AG04449 (cell line): ENCODE measurements at regions of chr6 and their contacts with region 1.

Region 1: GRCh38 chr6:130020907-130021629 is 2.7 kb downstream of the L3MBTL3 start:
- DNase-seq: peak; percentile 75
- H3K4me3 ChIP-seq: peak overlapping the region; percentile 73
- CTCF ChIP-seq: peak; percentile 82

Region 2: DNA sequence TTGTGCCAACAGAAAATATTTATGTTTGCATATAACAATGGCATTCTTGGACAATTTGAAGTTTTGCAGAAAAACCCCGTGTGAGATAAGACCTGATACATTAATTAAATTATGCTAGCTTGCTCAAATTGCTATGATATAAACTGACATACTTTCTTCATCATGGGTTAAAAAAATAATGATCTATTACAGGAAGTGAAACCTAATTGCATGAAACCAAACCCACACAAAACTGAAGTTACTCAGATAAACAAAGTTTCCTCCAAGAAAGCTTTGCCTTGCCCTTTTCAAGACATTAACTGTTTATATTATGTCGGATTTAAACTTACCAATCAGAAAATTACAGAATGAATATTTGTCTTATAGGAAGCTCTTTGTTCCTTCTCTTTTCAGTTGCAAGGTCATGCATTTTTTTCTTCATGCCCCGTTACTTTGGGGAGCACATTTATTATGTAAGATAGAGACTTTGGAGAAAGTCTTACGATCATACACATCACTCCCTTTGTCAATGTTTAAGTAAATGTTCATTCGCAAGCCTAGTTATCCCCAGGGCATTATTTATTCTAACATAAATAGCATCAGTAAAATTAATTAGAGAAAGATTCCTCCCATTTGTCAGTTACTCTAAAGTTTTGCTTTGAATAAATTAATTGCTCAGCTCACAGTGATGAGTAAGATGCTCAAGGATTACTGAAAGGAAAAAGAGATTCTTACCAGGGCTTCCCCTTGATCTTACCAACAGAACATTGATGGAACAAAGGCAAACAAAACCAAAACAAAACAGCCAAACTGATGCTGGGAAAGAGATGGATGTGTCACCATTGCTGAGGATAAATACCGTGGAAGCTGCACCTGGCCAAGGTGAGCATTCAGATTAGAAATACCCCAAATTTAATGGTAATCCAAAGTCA is 145.2 kb before region 1 on chr6:
- CTCF ChIA-PET with region 1: no interaction called
- POLR2A ChIA-PET with region 1: no interaction called
- DNase-seq: no peak
- H3K4me3 ChIP-seq: no peak overlapping the region
- CTCF ChIP-seq: no peak

Region 3: DNA sequence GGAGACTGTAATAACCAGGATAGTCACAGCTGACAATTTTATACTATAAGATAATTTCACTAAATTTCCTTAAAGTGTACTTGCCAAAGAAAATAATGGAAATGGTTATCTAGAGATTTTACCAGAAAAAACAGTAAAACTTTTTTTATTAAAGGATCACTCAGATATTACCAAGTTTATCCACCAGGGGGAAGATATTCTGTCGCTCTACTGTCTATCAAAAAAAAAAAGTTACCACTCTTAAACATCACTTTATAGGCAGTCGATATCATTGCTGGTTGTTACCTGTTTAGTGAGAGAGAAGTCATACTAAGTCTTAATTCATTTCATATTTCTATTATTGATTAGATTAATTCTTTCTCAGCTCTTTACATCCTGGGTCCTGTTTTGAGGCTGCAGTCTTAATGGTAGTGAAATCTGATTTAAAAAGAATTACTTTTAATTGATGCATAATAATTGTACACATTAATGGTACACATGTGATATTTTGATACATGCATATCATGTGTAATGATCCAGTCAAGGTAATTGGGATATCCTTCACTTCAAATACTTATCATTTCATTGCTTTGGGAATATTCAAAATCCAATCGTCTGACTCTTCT is 16.2 kb after region 1 on chr6:
- CTCF ChIA-PET with region 1: interaction called, 41 read pairs
- POLR2A ChIA-PET with region 1: interaction called, 3 read pairs
- DNase-seq: no peak
- H3K4me3 ChIP-seq: no peak overlapping the region
- CTCF ChIP-seq: peak; percentile 15